ENCODE measurements at regions of chr7 and their contacts with region 1.

Region 1: GRCh38 chr7:127392566-127393367 is at the start of gene ZNF800:
- DNase-seq: peak in 8 of 9 donors; percentile 73 to 92 (median 84)
- ATAC-seq: peak; percentile 90
- H3K4me3 ChIP-seq: peak within 1 kb of the TSS; percentile 96
- H3K4me3 Mint-ChIP-seq: peak within 1 kb of the TSS; percentile 94 to 100 (median 98)
- H3K27ac ChIP-seq: peak within 1 kb of the TSS; percentile 91
- H3K27ac Mint-ChIP-seq: peak within 1 kb of the TSS; percentile 91 to 99 (median 97)
- H3K4me1 ChIP-seq: peaks cover 7 to 43% of the 10 kb centered on the region in 2 donors
- H3K4me1 Mint-ChIP-seq: peaks cover 41 to 62% (median 52%) of the 10 kb centered on the region in 7 donors
- H3K27me3 ChIP-seq: no peaks in the 10 kb centered on the region
- H3K27me3 Mint-ChIP-seq: peaks cover 0 to 10% (median 0%) of the 10 kb centered on the region in 5 donors
- total RNA-seq, gene ZNF800: 43.3 to 71.9 (median 61.4) TPM

Region 2: DNA sequence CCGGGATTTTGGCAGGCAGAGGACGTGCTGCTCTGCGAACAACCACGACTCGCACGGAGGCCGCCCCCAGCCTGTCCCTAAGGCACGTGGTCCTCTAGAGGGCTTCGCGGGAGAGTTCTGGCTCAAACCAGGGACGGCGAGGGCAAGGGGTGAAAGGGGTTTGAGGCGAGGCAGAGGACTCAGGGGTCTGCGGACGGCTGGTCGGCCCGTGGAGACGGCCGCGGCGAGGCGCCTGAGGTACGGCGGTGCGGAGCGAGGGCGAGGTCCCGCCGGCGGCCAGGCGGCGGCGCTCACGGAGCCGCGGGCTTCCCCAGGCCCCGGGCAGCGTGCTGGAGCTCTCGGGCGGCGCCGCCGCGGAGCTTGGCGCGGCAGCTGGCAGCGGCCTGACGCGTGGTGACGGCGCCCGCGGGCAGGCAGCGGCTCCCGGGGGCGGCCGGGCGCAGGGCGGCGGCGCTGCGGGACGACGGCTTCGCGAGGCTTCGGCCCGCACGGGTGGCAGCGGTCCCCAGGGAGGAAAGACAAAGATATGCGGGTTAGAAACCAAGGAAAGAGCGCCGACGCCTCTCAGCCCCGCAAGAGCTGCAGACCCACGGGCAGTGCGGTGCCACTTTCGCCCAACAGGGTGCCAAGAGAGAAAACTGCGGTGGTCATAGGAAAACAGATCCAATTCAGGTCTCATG is 45.1 kb before region 1 on chr7:
- CTCF ChIA-PET with region 1: interaction called, 5 read pairs
- POLR2A ChIA-PET with region 1: interaction called, 13 read pairs
- intact Hi-C with region 1: loop called (anchors 1 kb)
- DNase-seq: peak; percentile 55 to 80 (median 73)
- ATAC-seq: peak; percentile 99
- H3K4me3 ChIP-seq: peak overlapping the region; percentile 46
- H3K4me3 Mint-ChIP-seq: peak overlapping the region; percentile 52 to 80 (median 65)
- H3K27ac ChIP-seq: no peak overlapping the region
- H3K27ac Mint-ChIP-seq: peak overlapping the region in 2 of 9 donors; percentile 48 to 68
- H3K4me1 ChIP-seq: peaks cover 3% of the 10 kb centered on the region in 2 donors
- H3K4me1 Mint-ChIP-seq: peaks cover 6 to 33% (median 22%) of the 10 kb centered on the region in 7 donors
- H3K27me3 ChIP-seq: no peaks in the 10 kb centered on the region
- H3K27me3 Mint-ChIP-seq: peaks cover 0 to 28% (median 0%) of the 10 kb centered on the region in 5 donors

Region 3: DNA sequence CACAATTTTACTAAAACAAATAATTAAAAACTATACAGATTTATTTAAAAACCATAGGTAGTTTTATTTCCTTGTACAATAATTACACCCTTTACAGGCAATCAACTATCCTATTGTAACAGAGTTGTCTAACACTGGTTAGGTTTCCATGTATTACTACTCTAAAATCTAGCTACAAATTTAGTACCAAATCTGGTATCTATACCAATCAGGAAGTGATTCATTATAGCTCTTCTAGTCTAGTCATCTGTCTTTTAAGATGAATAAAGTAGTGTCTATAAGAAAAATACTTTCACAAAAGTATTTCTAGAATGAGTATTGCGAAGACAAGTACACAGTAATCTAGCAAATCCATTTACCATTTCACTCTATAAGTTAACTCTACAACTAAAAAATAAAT is 17.1 kb before region 1 on chr7:
- CTCF ChIA-PET with region 1: no interaction called
- POLR2A ChIA-PET with region 1: interaction called, 12 read pairs
- intact Hi-C with region 1: loop called (anchors 1 to 2 kb)
- DNase-seq: no peak
- ATAC-seq: no peak
- H3K4me3 ChIP-seq: no peak overlapping the region
- H3K4me3 Mint-ChIP-seq: no peak overlapping the region
- H3K27ac ChIP-seq: no peak overlapping the region
- H3K27ac Mint-ChIP-seq: peak overlapping the region in 1 of 9 donors; percentile 37
- H3K4me1 ChIP-seq: peaks cover 17 to 18% of the 10 kb centered on the region in 2 donors
- H3K4me1 Mint-ChIP-seq: peaks cover 19 to 80% (median 60%) of the 10 kb centered on the region in 7 donors
- H3K27me3 ChIP-seq: no peaks in the 10 kb centered on the region
- H3K27me3 Mint-ChIP-seq: no peaks in the 10 kb centered on the region

Region 4: DNA sequence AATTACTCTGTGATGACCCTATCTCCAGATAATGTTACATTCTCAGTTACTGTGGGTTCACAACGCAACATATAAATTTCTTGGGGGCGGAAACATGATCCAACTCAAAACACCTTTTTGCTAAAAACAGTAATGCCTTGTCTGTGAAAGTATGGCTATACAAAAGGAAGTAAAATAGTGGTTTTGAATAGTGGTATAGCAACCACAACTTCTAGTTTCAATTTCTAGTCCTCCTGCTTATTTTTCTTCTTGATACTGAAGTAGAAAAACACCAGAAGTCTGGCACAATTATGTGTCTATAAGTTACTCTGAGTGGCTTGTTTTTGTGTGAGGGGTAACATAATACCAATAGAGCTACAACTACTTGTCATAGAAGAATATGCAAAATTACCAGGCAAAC is 21.2 kb after region 1 on chr7:
- CTCF ChIA-PET with region 1: interaction called, 12 read pairs
- POLR2A ChIA-PET with region 1: interaction called, 68 read pairs
- intact Hi-C with region 1: loop called (anchors 1 kb)
- DNase-seq: peak in 7 of 9 donors; percentile 37 to 76 (median 67)
- ATAC-seq: peak; percentile 88
- H3K4me3 ChIP-seq: peak overlapping the region; percentile 5
- H3K4me3 Mint-ChIP-seq: peak overlapping the region; percentile 57 to 87 (median 74)
- H3K27ac ChIP-seq: peak overlapping the region; percentile 61
- H3K27ac Mint-ChIP-seq: peak overlapping the region; percentile 88 to 99 (median 95)
- H3K4me1 ChIP-seq: peaks cover 20 to 45% of the 10 kb centered on the region in 2 donors
- H3K4me1 Mint-ChIP-seq: peaks cover 45 to 74% (median 68%) of the 10 kb centered on the region in 7 donors
- H3K27me3 ChIP-seq: no peaks in the 10 kb centered on the region
- H3K27me3 Mint-ChIP-seq: peaks cover 0 to 14% (median 0%) of the 10 kb centered on the region in 5 donors

Region 5: GRCh38 chr7:127447326-127447945 is 54.7 kb after region 1 on chr7:
- CTCF ChIA-PET with region 1: interaction called, 7 read pairs
- POLR2A ChIA-PET with region 1: interaction called, 23 read pairs
- intact Hi-C with region 1: loop called (anchors 1 kb)
- DNase-seq: peak in 8 of 9 donors; percentile 47 to 66 (median 56)
- ATAC-seq: peak; percentile 100
- H3K4me3 ChIP-seq: no peak overlapping the region
- H3K4me3 Mint-ChIP-seq: peak overlapping the region in 1 of 10 donors; percentile 43
- H3K27ac ChIP-seq: no peak overlapping the region
- H3K27ac Mint-ChIP-seq: peak overlapping the region in 1 of 9 donors; percentile 40
- H3K4me1 ChIP-seq: peaks cover 0 to 11% of the 10 kb centered on the region in 2 donors
- H3K4me1 Mint-ChIP-seq: peaks cover 5 to 33% (median 28%) of the 10 kb centered on the region in 7 donors
- H3K27me3 ChIP-seq: no peaks in the 10 kb centered on the region
- H3K27me3 Mint-ChIP-seq: peaks cover 4 to 51% (median 14%) of the 10 kb centered on the region in 5 donors

Region 6: GRCh38 chr7:127651556-127652332 is 259.0 kb after region 1 on chr7 and contains the start of gene SND1:
- CTCF ChIA-PET with region 1: no interaction called
- POLR2A ChIA-PET with region 1: interaction called, 5 read pairs
- intact Hi-C with region 1: loop called (anchors 1 kb)
- DNase-seq: peak; percentile 92 to 100 (median 98)
- ATAC-seq: peak; percentile 96
- H3K4me3 ChIP-seq: peak within 1 kb of the TSS; percentile 96
- H3K4me3 Mint-ChIP-seq: peak within 1 kb of the TSS in 6 of 10 donors; percentile 98 to 99 (median 98)
- H3K27ac ChIP-seq: peak within 1 kb of the TSS; percentile 86
- H3K27ac Mint-ChIP-seq: peak within 1 kb of the TSS in 5 of 9 donors; percentile 94 to 99 (median 98)
- H3K4me1 ChIP-seq: peaks cover 22 to 26% of the 10 kb centered on the region in 2 donors
- H3K4me1 Mint-ChIP-seq: peaks cover 5 to 55% (median 43%) of the 10 kb centered on the region in 7 donors
- H3K27me3 ChIP-seq: no peaks in the 10 kb centered on the region
- H3K27me3 Mint-ChIP-seq: peaks cover 0 to 4% (median 0%) of the 10 kb centered on the region in 5 donors
- total RNA-seq, gene SND1: 132 to 253 (median 163) TPM

Region 7: GRCh38 chr7:128343554-128344430 is 951.0 kb after region 1 on chr7 and contains the start of gene RBM28:
- CTCF ChIA-PET with region 1: no interaction called
- POLR2A ChIA-PET with region 1: no interaction called
- intact Hi-C with region 1: loop called (anchors 2 to 5 kb)
- DNase-seq: peak; percentile 80 to 93 (median 90)
- ATAC-seq: peak; percentile 98
- H3K4me3 ChIP-seq: peak within 1 kb of the TSS; percentile 97
- H3K4me3 Mint-ChIP-seq: peak within 1 kb of the TSS; percentile 89 to 98 (median 96)
- H3K27ac ChIP-seq: peak within 1 kb of the TSS; percentile 83
- H3K27ac Mint-ChIP-seq: peak within 1 kb of the TSS; percentile 83 to 96 (median 93)
- H3K4me1 ChIP-seq: peaks cover 16 to 20% of the 10 kb centered on the region in 2 donors
- H3K4me1 Mint-ChIP-seq: peaks cover 19 to 44% (median 34%) of the 10 kb centered on the region in 7 donors
- H3K27me3 ChIP-seq: no peaks in the 10 kb centered on the region
- H3K27me3 Mint-ChIP-seq: peaks cover 0 to 15% (median 7%) of the 10 kb centered on the region in 5 donors
- total RNA-seq, gene RBM28: 30.1 to 51.0 (median 43.5) TPM

Measured in naive thymus-derived CD4-positive, alpha-beta T cell (primary cell).